K562 (cell line): ENCODE measurements at regions of chr6 and their contacts with region 1.

Region 1: GRCh38 chr6:7196019-7196402 is 88.2 kb downstream of the RREB1 start:
- DNase-seq: peak; percentile 72 to 81 (median 78)
- ATAC-seq: peak; percentile 57
- H3K4me3 ChIP-seq: no peak overlapping the region
- H3K27ac ChIP-seq: peak overlapping the region; percentile 62
- H3K4me1 ChIP-seq: peaks cover 12 to 38% of the 10 kb centered on the region in 2 experiments
- H3K27me3 ChIP-seq: no peaks in the 10 kb centered on the region
- CTCF ChIP-seq: no peak
- EP300 ChIP-seq: no peak
- POLR2A ChIP-seq: 0 out of 2 replicates have a peak, but pooled peaks have one; percentile 37
- RAD21 ChIP-seq: no peak

Region 2: GRCh38 chr6:7154341-7155139 is 41.5 kb before region 1 on chr6:
- CTCF ChIA-PET with region 1: no interaction called
- POLR2A ChIA-PET with region 1: interaction called, 8 read pairs
- in situ Hi-C with region 1: no loop called
- intact Hi-C with region 1: loop called (anchors 5 kb)
- DNase-seq: no peak
- ATAC-seq: no peak
- H3K4me3 ChIP-seq: no peak overlapping the region
- H3K27ac ChIP-seq: no peak overlapping the region
- H3K4me1 ChIP-seq: peaks cover 31 to 70% of the 10 kb centered on the region in 2 experiments
- H3K27me3 ChIP-seq: no peaks in the 10 kb centered on the region
- CTCF ChIP-seq: no peak
- EP300 ChIP-seq: no peak
- POLR2A ChIP-seq: no peak
- RAD21 ChIP-seq: no peak